RWPE1 (cell line): ENCODE measurements at regions of chr21 and their contacts with region 1.

Region 1: GRCh38 chr21:18089786-18090185 is 154.8 kb upstream of the CHODL start:
- DNase-seq: no peak
- H3K27ac ChIP-seq: no peak overlapping the region
- CTCF ChIP-seq: no peak

Region 2: GRCh38 chr21:17679002-17679600 is 410.7 kb before region 1 on chr21:
- CTCF ChIA-PET with region 1: interaction called, 11 read pairs
- POLR2A ChIA-PET with region 1: no interaction called
- DNase-seq: peak; percentile 59
- H3K27ac ChIP-seq: no peak overlapping the region
- CTCF ChIP-seq: peak; percentile 83

Region 3: GRCh38 chr21:18058731-18059398 is 30.9 kb before region 1 on chr21:
- CTCF ChIA-PET with region 1: no interaction called
- POLR2A ChIA-PET with region 1: no interaction called
- DNase-seq: no peak
- H3K27ac ChIP-seq: no peak overlapping the region
- CTCF ChIP-seq: no peak